ENCODE measurements at regions of chr1 and their contacts with region 1.

Region 1: GRCh38 chr1:198157241-198157846 is 546 bp downstream of the NEK7 start:
- DNase-seq: peak; percentile 86 to 91
- H3K4me3 ChIP-seq: peak overlapping the region; percentile 88
- H3K4me3 Mint-ChIP-seq: peak overlapping the region; percentile 91
- H3K27ac Mint-ChIP-seq: peak overlapping the region; percentile 88
- H3K4me1 ChIP-seq: peaks cover 19% of the 10 kb centered on the region
- H3K4me1 Mint-ChIP-seq: peaks cover 28% of the 10 kb centered on the region
- H3K27me3 ChIP-seq: no peaks in the 10 kb centered on the region
- H3K27me3 Mint-ChIP-seq: no peaks in the 10 kb centered on the region
- CTCF ChIP-seq: no peak

Region 2: DNA sequence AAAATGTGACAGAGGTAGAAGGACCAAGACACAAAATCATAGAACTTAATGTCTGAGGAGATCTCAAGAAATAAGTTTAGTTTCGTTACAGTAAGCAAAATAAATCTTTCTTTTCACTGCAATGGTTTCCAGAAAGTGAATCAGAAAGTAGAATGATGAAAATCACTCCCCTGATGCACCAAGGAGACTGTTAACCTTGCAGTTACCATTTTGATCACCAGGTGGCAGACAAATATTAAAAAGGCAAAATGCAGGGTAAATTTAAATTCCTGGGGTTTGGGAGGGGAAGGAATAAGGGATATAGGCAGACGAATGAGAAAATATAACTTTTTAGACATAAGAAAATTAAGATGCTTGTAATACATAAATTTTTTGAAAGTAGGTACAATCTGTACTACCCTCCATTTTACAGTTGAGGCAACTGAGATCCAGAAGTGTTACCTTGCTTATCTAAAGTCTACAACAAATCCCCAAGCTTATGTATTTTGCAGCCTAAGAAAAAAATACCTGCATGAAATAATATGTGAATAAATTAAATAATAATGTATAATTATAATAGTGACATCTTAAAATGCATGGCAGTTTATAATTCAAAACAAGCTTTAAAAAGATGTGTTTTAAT is 636.1 kb before region 1 on chr1:
- CTCF ChIA-PET with region 1: no interaction called
- POLR2A ChIA-PET with region 1: no interaction called
- intact Hi-C with region 1: loop called (anchors 10 kb)
- DNase-seq: peak in 1 of 2 experiments; percentile 47
- H3K4me3 ChIP-seq: no peak overlapping the region
- H3K4me3 Mint-ChIP-seq: no peak overlapping the region
- H3K27ac Mint-ChIP-seq: no peak overlapping the region
- H3K4me1 ChIP-seq: no peaks in the 10 kb centered on the region
- H3K4me1 Mint-ChIP-seq: no peaks in the 10 kb centered on the region
- H3K27me3 ChIP-seq: no peaks in the 10 kb centered on the region
- H3K27me3 Mint-ChIP-seq: no peaks in the 10 kb centered on the region
- CTCF ChIP-seq: peak; percentile 64 to 70

Region 3: DNA sequence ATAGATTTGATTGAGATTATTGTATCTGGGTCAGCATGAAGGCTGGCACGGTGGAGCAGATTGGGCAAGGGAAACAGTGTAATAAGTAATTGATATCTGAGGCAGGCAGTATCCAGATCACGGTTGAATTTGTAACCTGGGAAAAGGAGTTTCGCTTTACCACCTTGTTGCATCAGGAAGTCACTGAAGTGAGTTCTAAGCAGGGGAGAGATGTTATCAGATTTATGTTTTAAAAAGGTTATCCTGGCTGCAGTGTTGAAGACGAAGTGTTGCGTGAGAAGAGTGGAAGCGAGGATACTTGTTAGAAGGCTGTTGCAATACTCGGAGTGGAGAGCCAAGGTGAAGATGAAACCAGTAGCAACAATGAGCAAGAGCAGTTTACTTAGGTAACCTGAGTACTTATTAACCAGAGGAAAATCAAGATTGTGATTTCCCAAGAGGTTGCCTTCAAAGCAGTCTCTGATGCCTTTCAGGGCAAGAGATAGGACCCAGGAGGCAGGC is 162.4 kb before region 1 on chr1:
- CTCF ChIA-PET with region 1: no interaction called
- POLR2A ChIA-PET with region 1: no interaction called
- intact Hi-C with region 1: loop called (anchors 5 kb)
- DNase-seq: peak; percentile 58 to 69
- H3K4me3 ChIP-seq: no peak overlapping the region
- H3K4me3 Mint-ChIP-seq: peak overlapping the region; percentile 50
- H3K27ac Mint-ChIP-seq: peak overlapping the region; percentile 88
- H3K4me1 ChIP-seq: peaks cover 19% of the 10 kb centered on the region
- H3K4me1 Mint-ChIP-seq: peaks cover 18% of the 10 kb centered on the region
- H3K27me3 ChIP-seq: no peaks in the 10 kb centered on the region
- H3K27me3 Mint-ChIP-seq: no peaks in the 10 kb centered on the region
- CTCF ChIP-seq: no peak

Region 4: GRCh38 chr1:198107041-198107440 is 50.3 kb before region 1 on chr1:
- CTCF ChIA-PET with region 1: no interaction called
- POLR2A ChIA-PET with region 1: no interaction called
- intact Hi-C with region 1: loop called (anchors 1 kb)
- DNase-seq: peak; percentile 78 to 82
- H3K4me3 ChIP-seq: no peak overlapping the region
- H3K4me3 Mint-ChIP-seq: no peak overlapping the region
- H3K27ac Mint-ChIP-seq: peak overlapping the region; percentile 44
- H3K4me1 ChIP-seq: peaks cover 27% of the 10 kb centered on the region
- H3K4me1 Mint-ChIP-seq: peaks cover 17% of the 10 kb centered on the region
- H3K27me3 ChIP-seq: no peaks in the 10 kb centered on the region
- H3K27me3 Mint-ChIP-seq: no peaks in the 10 kb centered on the region
- CTCF ChIP-seq: no peak

Region 5: GRCh38 chr1:198220428-198220827 is 63.1 kb after region 1 on chr1:
- CTCF ChIA-PET with region 1: no interaction called
- POLR2A ChIA-PET with region 1: no interaction called
- intact Hi-C with region 1: no loop called
- DNase-seq: no peak
- H3K4me3 ChIP-seq: no peak overlapping the region
- H3K4me3 Mint-ChIP-seq: no peak overlapping the region
- H3K27ac Mint-ChIP-seq: no peak overlapping the region
- H3K4me1 ChIP-seq: no peaks in the 10 kb centered on the region
- H3K4me1 Mint-ChIP-seq: peaks cover 6% of the 10 kb centered on the region
- H3K27me3 ChIP-seq: no peaks in the 10 kb centered on the region
- H3K27me3 Mint-ChIP-seq: no peaks in the 10 kb centered on the region
- CTCF ChIP-seq: no peak

Region 6: DNA sequence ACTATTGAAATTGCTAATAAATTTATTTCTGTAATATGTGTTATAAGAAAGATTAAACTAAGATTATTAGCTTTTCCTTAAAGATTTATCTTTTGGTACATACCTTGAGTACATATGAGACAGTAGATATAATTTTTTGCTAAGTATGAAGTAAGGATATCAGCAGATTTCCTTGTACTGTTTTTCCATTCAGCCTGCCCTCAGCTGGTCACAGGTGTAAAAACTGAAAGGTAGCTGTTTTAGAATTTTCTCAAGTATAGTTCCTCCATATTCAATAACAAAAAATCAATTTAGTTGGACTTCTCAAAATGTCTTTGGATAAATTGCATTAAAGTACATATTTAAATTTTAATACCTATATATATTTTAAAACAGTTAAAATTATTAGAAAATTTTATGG is 119.3 kb after region 1 on chr1:
- CTCF ChIA-PET with region 1: no interaction called
- POLR2A ChIA-PET with region 1: no interaction called
- intact Hi-C with region 1: loop called (anchors 1 kb)
- DNase-seq: no peak
- H3K4me3 ChIP-seq: no peak overlapping the region
- H3K4me3 Mint-ChIP-seq: no peak overlapping the region
- H3K27ac Mint-ChIP-seq: no peak overlapping the region
- H3K4me1 ChIP-seq: peaks cover 23% of the 10 kb centered on the region
- H3K4me1 Mint-ChIP-seq: peaks cover 7% of the 10 kb centered on the region
- H3K27me3 ChIP-seq: no peaks in the 10 kb centered on the region
- H3K27me3 Mint-ChIP-seq: no peaks in the 10 kb centered on the region
- CTCF ChIP-seq: peak in 1 of 2 experiments; percentile 11

Region 7: DNA sequence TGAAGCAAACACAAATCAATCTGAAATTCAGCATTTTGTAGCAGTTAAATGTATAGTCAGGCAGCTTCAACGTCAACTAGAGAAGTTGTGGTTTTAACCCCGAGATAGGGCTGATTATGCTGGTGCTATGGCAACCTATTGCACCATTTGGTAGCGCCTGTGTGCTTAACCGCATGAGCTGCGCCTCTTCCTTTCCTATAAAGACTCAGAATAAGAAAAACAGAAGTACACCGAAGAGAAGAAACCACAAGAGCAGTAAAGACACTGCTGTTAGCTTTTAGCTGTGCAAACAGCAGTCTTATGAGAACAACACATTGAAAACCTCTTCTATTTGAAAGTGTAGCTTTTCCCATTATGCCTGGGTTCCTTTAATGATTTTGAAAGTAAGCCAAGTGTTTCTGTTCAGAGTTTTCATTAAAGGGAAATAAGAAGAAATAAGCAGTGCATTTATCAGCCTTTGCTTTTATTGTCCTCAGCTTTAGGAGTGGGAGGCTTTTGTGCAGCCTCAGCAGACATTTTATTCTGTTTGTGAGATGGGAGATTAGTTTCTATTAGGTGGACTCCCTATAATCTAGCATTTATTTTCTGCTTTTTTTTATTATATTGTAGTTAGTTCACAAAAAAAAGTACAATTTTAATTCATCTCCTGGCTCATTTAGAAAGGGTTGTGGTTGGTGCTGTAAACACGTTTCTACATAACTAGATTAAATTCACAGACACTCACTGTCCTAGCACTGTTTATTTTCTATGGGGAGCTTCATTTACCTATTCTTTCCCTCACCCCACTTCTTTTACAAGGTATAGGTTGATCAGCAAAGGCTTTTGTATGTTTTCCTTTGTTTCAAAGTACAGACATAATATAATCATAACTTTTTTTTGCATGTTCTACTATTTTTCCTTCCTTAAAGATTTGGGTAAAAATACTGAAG is 524.8 kb after region 1 on chr1:
- CTCF ChIA-PET with region 1: no interaction called
- POLR2A ChIA-PET with region 1: no interaction called
- intact Hi-C with region 1: loop called (anchors 1 kb)
- DNase-seq: peak in 1 of 2 experiments; percentile 8
- H3K4me3 ChIP-seq: no peak overlapping the region
- H3K4me3 Mint-ChIP-seq: no peak overlapping the region
- H3K27ac Mint-ChIP-seq: no peak overlapping the region
- H3K4me1 ChIP-seq: no peaks in the 10 kb centered on the region
- H3K4me1 Mint-ChIP-seq: no peaks in the 10 kb centered on the region
- H3K27me3 ChIP-seq: no peaks in the 10 kb centered on the region
- H3K27me3 Mint-ChIP-seq: no peaks in the 10 kb centered on the region
- CTCF ChIP-seq: no peak